ENCODE measurements at regions of chr1 and their contacts with region 1.

Region 1: GRCh38 chr1:19377812-19378718 is 65.9 kb downstream of the SLC66A1 start:
- DNase-seq: no peak
- H3K4me3 ChIP-seq: no peak overlapping the region
- CTCF ChIP-seq: no peak

Region 2: DNA sequence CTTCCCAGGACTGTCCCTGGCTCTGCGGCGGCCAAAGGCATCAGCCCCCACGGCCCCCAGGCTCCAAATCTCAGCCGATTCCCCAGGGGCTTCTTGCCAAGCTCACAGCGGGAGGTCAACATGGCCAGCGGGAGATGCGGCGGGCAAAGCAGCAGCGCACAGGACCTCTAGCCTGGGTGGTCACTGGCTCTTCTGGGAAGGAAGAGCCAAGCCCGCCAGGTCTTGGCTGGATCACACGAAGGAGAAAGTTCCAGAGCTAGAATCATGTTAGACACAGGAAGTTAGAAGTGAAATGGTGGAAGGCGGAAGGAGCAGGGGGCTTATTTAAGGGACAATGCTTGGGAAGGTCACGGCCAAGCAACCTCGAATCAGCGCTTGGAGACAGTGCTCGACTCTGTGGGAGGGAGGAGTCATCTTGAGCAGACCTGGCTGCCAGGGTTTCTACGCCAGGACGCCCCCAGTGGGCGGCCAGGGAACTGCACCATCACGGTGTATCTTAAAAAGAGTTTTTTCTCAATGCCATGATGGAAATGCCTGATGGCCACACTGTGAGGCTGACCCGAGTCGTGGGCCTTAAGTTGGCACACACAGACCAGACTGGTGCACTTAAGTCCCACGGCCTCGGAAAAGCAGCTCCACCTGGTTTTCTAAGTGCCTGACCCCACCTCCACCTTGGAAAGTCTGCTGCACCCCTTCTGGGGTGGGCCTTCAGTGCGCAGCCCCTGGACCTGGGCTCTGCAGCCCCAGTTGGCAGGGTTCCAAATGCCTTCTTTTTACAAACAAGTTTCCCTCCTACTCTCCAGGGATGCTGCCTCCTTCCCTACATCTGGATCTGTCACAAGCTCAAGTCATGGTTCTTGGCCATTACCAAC is 36.6 kb before region 1 on chr1:
- in situ Hi-C with region 1: loop called (anchors 5 kb)
- DNase-seq: peak; percentile 33
- H3K4me3 ChIP-seq: no peak overlapping the region
- CTCF ChIP-seq: peak; percentile 95

Region 3: GRCh38 chr1:20124456-20125057 is 746.5 kb after region 1 on chr1:
- in situ Hi-C with region 1: no loop called
- DNase-seq: peak; percentile 57
- H3K4me3 ChIP-seq: no peak overlapping the region
- CTCF ChIP-seq: no peak